Activated naive CD4-positive, alpha-beta T cell treated with anti-CD3 and anti-CD28 coated beads, Interleukin-2, amount 10 ng/mL, durations not matched to agents 7 days and 5 days (primary cell): ENCODE measurements at regions of chr4 and their contacts with region 1.

Region 1: DNA sequence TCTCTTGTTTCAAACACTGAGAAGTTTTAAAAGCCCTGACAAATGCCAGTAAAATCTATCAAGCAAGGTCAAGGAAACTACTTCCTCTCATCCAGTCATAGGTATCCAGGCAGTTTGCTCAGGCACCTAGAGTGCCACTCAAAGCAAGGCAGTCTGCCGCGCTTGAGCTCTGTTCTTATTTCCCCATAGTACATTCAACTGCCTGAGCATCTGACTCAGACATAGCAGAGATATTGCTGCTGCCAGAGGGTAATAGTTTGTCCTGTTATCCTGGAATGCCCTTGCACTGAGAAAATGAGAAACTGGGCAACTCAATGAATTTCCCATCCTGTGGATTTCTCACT is 16.1 kb upstream of the ATP8A1 start:
- DNase-seq: no peak
- H3K4me3 Mint-ChIP-seq: no peak overlapping the region
- H3K27ac Mint-ChIP-seq: peak overlapping the region; percentile 84
- H3K4me1 Mint-ChIP-seq: peaks cover 44% of the 10 kb centered on the region
- H3K27me3 Mint-ChIP-seq: no peaks in the 10 kb centered on the region

Region 2: DNA sequence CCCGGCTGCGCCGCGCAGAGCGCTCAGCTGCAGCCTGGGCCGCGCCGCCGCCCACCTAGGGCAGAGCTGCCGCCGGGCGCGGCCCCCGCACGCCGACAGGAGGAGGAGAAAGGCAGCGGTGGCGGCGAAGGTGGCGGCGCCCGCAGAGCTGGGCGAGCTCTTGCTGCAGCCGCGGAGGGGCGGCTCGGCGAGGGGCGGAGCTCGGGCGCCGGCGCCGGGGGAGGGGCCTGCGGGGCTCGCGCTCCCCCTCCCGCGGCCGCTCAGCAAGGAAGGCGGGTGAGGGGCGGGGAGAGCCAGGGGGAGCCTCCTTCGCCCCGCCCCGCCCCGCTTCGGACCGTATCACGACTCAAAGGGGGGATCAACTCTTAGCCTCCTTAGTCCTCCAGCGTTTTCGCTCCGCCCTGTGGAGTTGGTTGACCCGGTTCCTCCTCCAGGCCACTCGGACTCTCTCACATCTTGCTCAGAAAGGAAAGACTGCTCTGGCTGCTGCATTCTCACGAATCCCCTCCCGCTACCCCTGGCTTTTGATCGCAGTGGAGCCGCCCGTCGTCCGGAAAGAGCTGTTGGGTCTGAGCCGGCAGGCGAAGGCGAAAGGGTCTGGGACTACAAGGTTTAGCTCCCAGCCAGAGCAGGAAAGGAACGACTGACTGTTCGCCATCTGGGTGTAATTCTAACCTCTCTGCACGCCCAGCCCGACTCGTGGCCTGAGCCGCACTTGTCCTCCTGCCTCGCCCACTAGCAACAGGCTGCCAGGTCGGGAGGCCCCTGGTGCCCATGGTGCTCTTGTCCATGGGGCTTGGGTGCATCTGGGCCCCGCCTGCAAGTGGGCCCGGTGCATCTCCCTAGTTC is 15.9 kb before region 1 on chr4 and contains the start of gene ATP8A1:
- CTCF ChIA-PET with region 1: interaction called, 13 read pairs
- DNase-seq: peak; percentile 94
- H3K4me3 Mint-ChIP-seq: peak within 1 kb of the TSS; percentile 91
- H3K27ac Mint-ChIP-seq: peak within 1 kb of the TSS; percentile 96
- H3K4me1 Mint-ChIP-seq: peaks cover 41% of the 10 kb centered on the region
- H3K27me3 Mint-ChIP-seq: no peaks in the 10 kb centered on the region